Caco-2 (cell line): ENCODE measurements at regions of chr5 and their contacts with region 1.

Region 1: GRCh38 chr5:82641331-82642003 is 363.3 kb upstream of the RPS23 start:
- DNase-seq: peak in 1 of 2 experiments; percentile 64
- H3K4me3 ChIP-seq: no peak overlapping the region
- H3K4me3 Mint-ChIP-seq: no peak overlapping the region
- H3K27ac Mint-ChIP-seq: no peak overlapping the region
- H3K4me1 ChIP-seq: peaks cover under 1% of the 10 kb centered on the region
- H3K4me1 Mint-ChIP-seq: peaks cover 4% of the 10 kb centered on the region
- H3K27me3 ChIP-seq: no peaks in the 10 kb centered on the region
- H3K27me3 Mint-ChIP-seq: no peaks in the 10 kb centered on the region
- CTCF ChIP-seq: peak; percentile 65 to 68

Region 2: GRCh38 chr5:82793808-82794419 is 152.4 kb after region 1 on chr5:
- CTCF ChIA-PET with region 1: no interaction called
- POLR2A ChIA-PET with region 1: no interaction called
- intact Hi-C with region 1: loop called (anchors 1 kb)
- DNase-seq: peak in 1 of 2 experiments; percentile 47
- H3K4me3 ChIP-seq: no peak overlapping the region
- H3K4me3 Mint-ChIP-seq: no peak overlapping the region
- H3K27ac Mint-ChIP-seq: no peak overlapping the region
- H3K4me1 ChIP-seq: no peaks in the 10 kb centered on the region
- H3K4me1 Mint-ChIP-seq: no peaks in the 10 kb centered on the region
- H3K27me3 ChIP-seq: no peaks in the 10 kb centered on the region
- H3K27me3 Mint-ChIP-seq: no peaks in the 10 kb centered on the region
- CTCF ChIP-seq: peak; percentile 53 to 57

Region 3: GRCh38 chr5:83076742-83077661 is 435.5 kb after region 1 on chr5 and contains the starts of genes TMEM167A and XRCC4:
- CTCF ChIA-PET with region 1: no interaction called
- POLR2A ChIA-PET with region 1: no interaction called
- intact Hi-C with region 1: loop called (anchors 5 kb)
- DNase-seq: peak; percentile 96 to 98
- H3K4me3 ChIP-seq: peak within 1 kb of the TSS; percentile 94
- H3K4me3 Mint-ChIP-seq: peak within 1 kb of the TSS; percentile 99
- H3K27ac Mint-ChIP-seq: peak within 1 kb of the TSS; percentile 100
- H3K4me1 ChIP-seq: peaks cover 4% of the 10 kb centered on the region; the same call in 1 of the 2 replicates
- H3K4me1 Mint-ChIP-seq: no peaks in the 10 kb centered on the region
- H3K27me3 ChIP-seq: no peaks in the 10 kb centered on the region
- H3K27me3 Mint-ChIP-seq: no peaks in the 10 kb centered on the region
- CTCF ChIP-seq: no peak
- total RNA-seq, gene TMEM167A: 85.0 and 97.1 TPM in 2 replicates
- total RNA-seq, gene XRCC4: 13.0 and 13.5 TPM in 2 replicates

Region 4: GRCh38 chr5:83430130-83431010 is 788.9 kb after region 1 on chr5:
- CTCF ChIA-PET with region 1: no interaction called
- POLR2A ChIA-PET with region 1: no interaction called
- intact Hi-C with region 1: loop called (anchors 1 kb)
- DNase-seq: peak; percentile 58 to 73
- H3K4me3 ChIP-seq: no peak overlapping the region
- H3K4me3 Mint-ChIP-seq: no peak overlapping the region
- H3K27ac Mint-ChIP-seq: no peak overlapping the region
- H3K4me1 ChIP-seq: 0 out of 2 replicates have a peak, but pooled peaks cover 4% of the 10 kb centered on the region
- H3K4me1 Mint-ChIP-seq: no peaks in the 10 kb centered on the region
- H3K27me3 ChIP-seq: no peaks in the 10 kb centered on the region
- H3K27me3 Mint-ChIP-seq: peaks cover 3% of the 10 kb centered on the region
- CTCF ChIP-seq: peak; percentile 88 to 95